Lower lobe of right lung (tissue), 2 donors: ENCODE measurements at regions of chr7 and their contacts with region 1.

Region 1: GRCh38 chr7:24819916-24820689 is 62.8 kb upstream of the GSDME start:
- DNase-seq: peak; percentile 80
- ATAC-seq: peak; percentile 93 to 94
- H3K4me3 ChIP-seq: no peak overlapping the region
- H3K27ac ChIP-seq: peak overlapping the region; percentile 70
- H3K4me1 ChIP-seq: peaks cover 31% of the 10 kb centered on the region
- H3K27me3 ChIP-seq: no peaks in the 10 kb centered on the region
- CTCF ChIP-seq: peak; percentile 81

Region 2: GRCh38 chr7:24948739-24949138 is 128.6 kb after region 1 on chr7:
- intact Hi-C with region 1: no loop called
- DNase-seq: no peak
- ATAC-seq: no peak
- H3K4me3 ChIP-seq: no peak overlapping the region
- H3K27ac ChIP-seq: no peak overlapping the region
- H3K4me1 ChIP-seq: no peaks in the 10 kb centered on the region
- H3K27me3 ChIP-seq: no peaks in the 10 kb centered on the region
- CTCF ChIP-seq: no peak

Region 3: GRCh38 chr7:25069900-25070443 is 249.9 kb after region 1 on chr7:
- intact Hi-C with region 1: loop called (anchors 10 kb)
- DNase-seq: peak; percentile 55
- ATAC-seq: peak; percentile 77 to 82
- H3K4me3 ChIP-seq: peak overlapping the region; percentile 33
- H3K27ac ChIP-seq: no peak overlapping the region
- H3K4me1 ChIP-seq: no peaks in the 10 kb centered on the region
- H3K27me3 ChIP-seq: no peaks in the 10 kb centered on the region
- CTCF ChIP-seq: peak; percentile 90

Region 4: DNA sequence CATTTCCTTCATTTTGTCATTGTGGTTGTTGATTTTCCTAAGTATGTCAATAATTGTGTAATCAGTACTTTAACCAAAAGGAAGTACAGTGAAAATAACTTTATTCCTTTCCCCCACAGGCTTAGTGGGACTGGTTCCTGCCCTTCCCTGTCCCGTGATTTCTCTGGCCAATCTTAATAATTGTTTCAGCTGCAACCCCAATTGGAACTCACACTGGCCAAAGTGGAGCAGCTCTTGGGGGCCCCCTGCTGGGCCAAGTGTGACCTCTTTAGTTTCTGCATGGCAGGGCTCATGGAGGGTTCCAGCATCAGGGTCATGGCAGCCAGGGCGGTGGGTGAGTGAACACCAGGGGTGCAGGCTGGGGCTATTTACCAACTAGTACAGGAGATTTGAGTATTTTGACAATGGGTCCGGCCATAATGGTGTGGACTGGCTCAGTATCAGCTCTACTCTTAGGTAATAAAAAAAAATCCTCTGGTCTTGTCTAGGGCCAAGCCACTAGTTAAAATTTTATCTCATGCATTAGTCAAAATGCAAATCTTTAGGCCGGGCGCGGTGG is 273.2 kb after region 1 on chr7:
- intact Hi-C with region 1: loop called (anchors 10 kb)
- DNase-seq: peak; percentile 84
- ATAC-seq: peak; percentile 94 to 96
- H3K4me3 ChIP-seq: no peak overlapping the region
- H3K27ac ChIP-seq: no peak overlapping the region
- H3K4me1 ChIP-seq: peaks cover 11% of the 10 kb centered on the region
- H3K27me3 ChIP-seq: no peaks in the 10 kb centered on the region
- CTCF ChIP-seq: peak; percentile 77